Activated CD4-positive, alpha-beta memory T cell treated with anti-CD3 and anti-CD28 coated beads for 36 hours (primary cell): ENCODE measurements at regions of chr11 and their contacts with region 1.

Region 1: DNA sequence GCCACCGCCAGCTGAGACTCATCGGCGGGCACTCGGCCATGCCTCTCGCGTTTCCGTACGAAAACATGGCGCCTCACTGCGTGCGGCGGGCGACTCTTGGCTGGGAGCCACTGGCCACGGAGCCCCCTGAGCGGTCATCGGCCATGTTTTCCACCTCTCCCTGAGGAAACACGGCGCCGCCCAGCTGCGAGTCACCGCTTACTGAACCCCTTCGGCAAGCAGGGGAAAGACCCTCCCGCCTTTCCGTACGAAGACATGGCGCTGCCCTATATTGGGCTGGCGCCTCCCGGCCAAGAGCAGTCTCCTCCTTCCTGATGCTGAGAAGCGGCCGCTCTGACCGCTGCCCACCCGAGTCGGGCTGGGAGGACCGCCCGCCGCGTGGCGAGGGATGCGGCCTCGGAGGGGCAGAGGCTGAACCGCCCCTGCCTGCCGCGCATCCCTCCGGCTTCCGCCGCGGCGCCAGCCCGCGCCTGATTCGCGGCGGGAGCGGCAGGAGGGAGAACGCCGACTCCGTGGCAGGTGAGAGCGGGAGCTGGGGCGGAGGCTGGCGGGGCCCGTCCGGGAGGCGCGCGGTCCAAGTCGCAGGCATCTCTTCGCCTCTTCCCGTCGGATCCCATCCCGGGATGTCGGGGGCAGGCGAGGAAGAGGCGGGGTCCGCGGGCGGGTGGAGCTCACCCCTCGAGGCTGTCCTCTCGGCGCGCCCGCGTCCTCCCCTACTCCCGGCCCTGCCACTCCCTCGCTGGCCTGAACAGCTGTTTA is at the start of gene TCP11L1:
- DNase-seq: peak; percentile 89
- H3K4me3 Mint-ChIP-seq: peak within 1 kb of the TSS; percentile 87
- H3K27ac Mint-ChIP-seq: peak within 1 kb of the TSS; percentile 92
- H3K4me1 Mint-ChIP-seq: peaks cover 37% of the 10 kb centered on the region
- H3K27me3 Mint-ChIP-seq: peaks cover 10% of the 10 kb centered on the region
- total RNA-seq, gene TCP11L1: 10.0 to 11.4 TPM

Region 2: GRCh38 chr11:32615422-32615821 is 424.0 kb before region 1 on chr11:
- CTCF ChIA-PET with region 1: no interaction called
- POLR2A ChIA-PET with region 1: no interaction called
- intact Hi-C with region 1: no loop called
- DNase-seq: no peak
- H3K4me3 Mint-ChIP-seq: no peak overlapping the region
- H3K27ac Mint-ChIP-seq: no peak overlapping the region
- H3K4me1 Mint-ChIP-seq: no peaks in the 10 kb centered on the region
- H3K27me3 Mint-ChIP-seq: peaks cover 8% of the 10 kb centered on the region

Region 3: GRCh38 chr11:32893343-32894148 is 145.9 kb before region 1 on chr11:
- CTCF ChIA-PET with region 1: interaction called, 4 read pairs
- POLR2A ChIA-PET with region 1: interaction called, 4 read pairs
- intact Hi-C with region 1: loop called (anchors 2 kb)
- DNase-seq: peak; percentile 68
- H3K4me3 Mint-ChIP-seq: peak overlapping the region; percentile 97
- H3K27ac Mint-ChIP-seq: peak overlapping the region; percentile 90
- H3K4me1 Mint-ChIP-seq: peaks cover 32% of the 10 kb centered on the region
- H3K27me3 Mint-ChIP-seq: no peaks in the 10 kb centered on the region

Region 4: DNA sequence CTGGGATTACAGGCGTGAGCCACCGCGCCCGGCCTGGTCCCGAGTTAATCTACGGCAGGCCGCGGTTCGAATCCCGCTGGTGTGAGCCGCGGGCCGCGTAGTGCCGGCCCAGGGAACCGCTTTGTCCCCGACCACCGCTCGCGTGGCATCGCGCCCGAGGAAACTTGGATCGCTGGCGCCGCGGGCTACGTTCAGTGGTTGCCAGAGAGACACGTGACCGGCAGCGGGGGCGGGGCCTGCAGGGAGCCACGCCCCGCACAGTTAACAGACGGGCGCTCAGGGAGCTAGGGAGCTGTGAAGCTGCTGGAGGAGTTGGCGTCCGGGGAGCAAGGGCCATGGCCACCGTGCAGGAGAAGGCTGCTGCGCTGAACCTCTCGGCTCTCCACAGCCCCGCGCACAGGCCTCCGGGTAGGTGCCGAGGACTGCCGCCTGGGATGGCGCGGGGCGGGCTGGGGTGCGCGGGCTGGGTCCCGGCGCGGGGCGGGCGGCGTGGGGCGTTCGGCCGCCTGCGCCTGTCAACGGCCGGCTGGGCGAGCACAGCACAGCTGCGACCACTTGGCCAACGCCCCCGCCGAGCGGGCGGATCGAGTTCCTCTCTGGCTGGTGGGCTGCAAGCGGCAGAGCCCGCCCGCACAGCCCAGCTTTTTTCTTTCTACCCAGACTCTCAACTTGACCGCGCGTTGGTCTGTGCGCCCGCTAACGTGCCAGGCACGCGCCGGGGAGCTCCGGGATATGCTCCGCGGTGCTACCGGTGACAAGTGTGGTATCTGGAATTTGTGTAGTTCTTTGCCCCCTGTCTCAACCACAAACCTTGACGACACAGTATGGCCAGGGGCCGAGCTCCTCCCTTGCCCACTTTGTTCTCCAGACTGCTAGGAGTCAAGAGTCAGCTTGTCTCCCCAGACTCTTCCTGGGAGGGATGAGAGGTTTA is 23.6 kb before region 1 on chr11 and contains the start of gene DEPDC7:
- CTCF ChIA-PET with region 1: interaction called, 10 read pairs
- POLR2A ChIA-PET with region 1: interaction called, 15 read pairs
- intact Hi-C with region 1: loop called (anchors 1 kb)
- DNase-seq: peak; percentile 83
- H3K4me3 Mint-ChIP-seq: peak within 1 kb of the TSS; percentile 75
- H3K27ac Mint-ChIP-seq: no peak within 1 kb of the TSS
- H3K4me1 Mint-ChIP-seq: peaks cover 33% of the 10 kb centered on the region
- H3K27me3 Mint-ChIP-seq: peaks cover 29% of the 10 kb centered on the region
- total RNA-seq, gene DEPDC7: 0.86 to 0.90 TPM

Region 5: DNA sequence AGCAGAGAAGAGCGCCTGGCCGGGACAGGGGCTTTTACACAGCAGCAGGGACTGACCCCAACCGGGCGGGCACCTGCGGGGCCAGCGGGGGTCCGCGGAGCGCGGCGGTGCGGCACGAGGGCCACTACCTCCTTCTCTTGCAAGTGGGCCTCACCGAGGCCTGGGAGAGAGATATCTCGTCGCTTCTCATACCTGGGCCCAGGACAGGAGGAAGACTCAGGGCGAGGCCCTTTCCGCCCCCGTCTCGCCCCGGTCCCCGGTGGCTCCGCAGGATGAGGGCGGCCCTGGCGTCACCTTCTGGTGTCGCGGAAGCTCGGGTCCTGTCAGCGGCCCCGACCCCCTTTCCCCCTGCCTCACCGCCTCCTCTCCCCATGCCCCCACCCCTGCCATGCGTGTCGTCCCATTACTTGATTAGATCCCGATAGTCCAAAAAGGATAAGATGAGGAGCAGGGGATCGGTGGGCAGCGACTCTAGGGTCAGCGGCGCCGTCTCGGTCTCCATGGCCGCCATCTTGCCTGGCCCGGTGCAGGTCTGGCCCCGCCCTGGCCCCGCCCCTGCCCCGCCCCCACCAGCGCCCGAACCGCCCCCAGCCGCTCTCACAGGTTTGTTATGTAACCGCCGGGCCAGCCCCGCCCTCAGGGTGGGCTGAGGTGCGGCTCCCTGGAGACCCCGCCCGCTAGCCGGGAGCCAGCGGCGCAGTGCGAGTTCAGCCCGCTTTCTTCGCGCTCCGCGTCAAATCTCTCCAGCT is 734.7 kb after region 1 on chr11 and contains the start of gene FBXO3:
- CTCF ChIA-PET with region 1: no interaction called
- POLR2A ChIA-PET with region 1: no interaction called
- intact Hi-C with region 1: loop called (anchors 10 kb)
- DNase-seq: peak; percentile 84
- H3K4me3 Mint-ChIP-seq: peak within 1 kb of the TSS; percentile 95
- H3K27ac Mint-ChIP-seq: peak within 1 kb of the TSS; percentile 89
- H3K4me1 Mint-ChIP-seq: peaks cover 48% of the 10 kb centered on the region
- H3K27me3 Mint-ChIP-seq: peaks cover 8% of the 10 kb centered on the region
- total RNA-seq, gene FBXO3: 16.5 to 17.7 TPM